ENCODE measurements at regions of chr12 and their contacts with region 1.

Region 1: DNA sequence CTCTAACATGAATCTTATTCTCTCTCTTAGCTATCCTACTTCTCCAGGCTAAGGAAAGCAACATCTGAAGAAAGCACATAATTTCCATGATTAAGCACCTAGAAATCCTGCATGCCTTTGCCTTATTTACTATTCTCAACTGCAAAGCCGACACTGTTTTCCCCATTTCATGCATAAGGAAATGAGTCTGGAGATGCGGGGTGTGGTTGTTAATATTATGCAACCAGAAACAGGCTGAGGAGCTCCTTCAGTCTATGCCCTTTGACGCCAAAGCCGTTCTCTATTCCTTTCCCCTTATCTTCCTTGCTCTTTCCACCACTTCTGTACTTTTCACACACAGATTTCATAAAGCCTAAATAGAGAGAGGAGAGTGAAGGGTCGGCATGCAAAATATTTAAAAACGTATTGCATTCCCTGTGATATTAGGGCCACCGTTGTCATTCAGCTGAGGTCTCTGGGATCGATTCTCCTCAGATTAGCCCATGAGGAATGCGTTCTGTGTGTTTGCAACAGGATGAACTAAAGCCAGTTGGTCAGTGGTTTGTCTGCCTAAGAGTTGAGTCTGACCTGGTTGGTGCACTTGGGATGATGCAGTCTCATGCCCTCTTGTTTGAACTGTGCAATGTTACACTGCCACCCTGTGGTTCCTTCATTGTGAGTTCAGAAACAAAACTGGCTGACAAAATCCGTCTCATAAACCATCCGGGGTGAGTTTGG is 53.1 kb upstream of the PLEKHG7 start:
- DNase-seq: peak; percentile 66
- CTCF ChIP-seq: peak; percentile 70

Region 2: DNA sequence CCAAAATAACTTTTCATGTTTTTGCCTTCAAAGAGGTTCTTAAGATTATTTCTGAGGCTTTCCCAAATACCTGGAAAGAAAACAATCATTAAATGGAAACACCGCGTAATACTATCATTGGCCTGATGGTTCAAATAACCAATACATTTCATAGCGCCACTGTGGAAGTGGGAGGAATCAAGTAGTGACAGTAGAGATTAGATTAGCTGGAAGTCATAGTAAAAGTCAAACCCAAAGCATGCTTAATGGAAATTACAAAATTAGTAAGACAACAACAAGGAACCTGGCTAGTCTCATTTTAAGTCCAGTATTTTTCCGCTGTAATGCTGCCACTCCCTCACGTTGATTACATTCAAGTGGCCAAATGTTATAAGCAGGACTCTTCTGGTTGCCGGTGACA is 11.6 kb after region 1 on chr12:
- CTCF ChIA-PET with region 1: interaction called, 10 read pairs
- POLR2A ChIA-PET with region 1: no interaction called
- DNase-seq: no peak
- CTCF ChIP-seq: no peak

Region 3: DNA sequence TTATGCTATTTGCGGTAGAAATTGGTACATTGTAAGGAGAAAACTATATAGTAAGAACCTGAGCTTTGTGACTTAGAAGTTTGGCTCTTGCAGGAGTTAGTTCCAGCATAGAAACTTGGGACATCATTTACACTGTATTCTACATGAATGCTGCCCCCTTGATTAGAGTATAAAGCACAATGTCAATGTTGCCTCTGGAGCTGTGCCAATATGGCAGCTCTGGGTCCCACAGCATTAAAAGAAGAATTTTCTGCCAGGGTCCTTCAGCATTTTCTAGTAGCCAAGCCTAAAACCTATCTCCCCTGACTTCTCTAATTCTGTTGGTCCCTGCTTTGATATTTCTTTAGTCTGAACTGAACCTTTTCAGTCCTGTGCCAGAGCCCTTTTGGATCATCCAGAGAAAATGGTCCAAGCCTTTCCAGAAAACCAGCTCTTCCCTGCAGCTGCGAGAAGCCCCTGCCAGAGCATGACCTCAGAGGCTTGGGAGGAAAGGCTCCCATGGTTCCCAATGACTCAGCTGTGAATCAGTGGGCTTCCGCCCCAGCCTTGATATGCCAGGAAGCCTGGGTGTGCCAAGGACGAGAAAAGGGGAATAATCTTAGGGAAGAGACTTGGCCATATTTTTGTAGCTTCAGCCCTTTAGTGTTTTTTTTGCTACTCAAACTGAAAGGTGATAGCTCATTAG is 96.3 kb after region 1 on chr12:
- CTCF ChIA-PET with region 1: no interaction called
- POLR2A ChIA-PET with region 1: no interaction called
- DNase-seq: no peak
- CTCF ChIP-seq: no peak

Measured in GM10248 (cell line).